Ovary (tissue), 10 donors: ENCODE measurements at regions of chr3 and their contacts with region 1.

Region 1: GRCh38 chr3:133578548-133579191 is 5.2 kb downstream of the CDV3 start:
- DNase-seq: no peak
- H3K4me3 ChIP-seq: no peak overlapping the region
- H3K27ac ChIP-seq: no peak overlapping the region
- H3K4me1 ChIP-seq: peaks cover 12% of the 10 kb centered on the region
- H3K27me3 ChIP-seq: no peaks in the 10 kb centered on the region
- CTCF ChIP-seq: no peak
- EP300 ChIP-seq: no peak
- POLR2A ChIP-seq: no peak

Region 2: GRCh38 chr3:133474251-133474801 is 104.3 kb before region 1 on chr3:
- intact Hi-C with region 1: loop called in 1 of 4 experiments (anchors 5 kb)
- DNase-seq: peak; percentile 46 to 71 (median 57)
- H3K4me3 ChIP-seq: no peak overlapping the region
- H3K27ac ChIP-seq: peak overlapping the region in 1 of 2 donors; percentile 29
- H3K4me1 ChIP-seq: peaks cover 2% of the 10 kb centered on the region
- H3K27me3 ChIP-seq: no peaks in the 10 kb centered on the region
- CTCF ChIP-seq: no peak
- EP300 ChIP-seq: no peak
- POLR2A ChIP-seq: no peak